Mammary epithelial cell (primary cell): ENCODE measurements at regions of chr10 and their contacts with region 1.

Region 1: DNA sequence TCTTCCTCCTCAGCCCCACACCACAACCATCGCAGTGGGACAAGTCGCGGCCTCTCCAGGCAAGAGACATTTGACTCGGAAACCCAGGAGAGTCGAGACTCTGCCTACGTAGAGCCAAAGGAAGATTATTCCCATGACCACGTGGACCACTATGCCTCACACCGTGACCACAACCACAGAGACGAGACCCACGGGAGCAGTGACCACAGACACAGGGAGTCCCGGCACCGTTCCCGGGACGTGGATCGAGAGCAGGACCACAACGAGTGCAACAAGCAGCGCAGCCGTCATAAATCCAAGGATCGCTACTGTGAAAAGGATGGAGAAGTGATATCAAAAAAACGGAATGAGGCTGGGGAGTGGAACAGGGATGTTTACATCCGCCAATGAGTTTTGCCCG is 112.1 kb downstream of the NSUN6 start:
- DNase-seq: no peak
- H3K4me3 ChIP-seq: no peak overlapping the region
- H3K27ac ChIP-seq: no peak overlapping the region
- H3K4me1 ChIP-seq: no peaks in the 10 kb centered on the region
- H3K27me3 ChIP-seq: no peaks in the 10 kb centered on the region
- CTCF ChIP-seq: no peak

Region 2: DNA sequence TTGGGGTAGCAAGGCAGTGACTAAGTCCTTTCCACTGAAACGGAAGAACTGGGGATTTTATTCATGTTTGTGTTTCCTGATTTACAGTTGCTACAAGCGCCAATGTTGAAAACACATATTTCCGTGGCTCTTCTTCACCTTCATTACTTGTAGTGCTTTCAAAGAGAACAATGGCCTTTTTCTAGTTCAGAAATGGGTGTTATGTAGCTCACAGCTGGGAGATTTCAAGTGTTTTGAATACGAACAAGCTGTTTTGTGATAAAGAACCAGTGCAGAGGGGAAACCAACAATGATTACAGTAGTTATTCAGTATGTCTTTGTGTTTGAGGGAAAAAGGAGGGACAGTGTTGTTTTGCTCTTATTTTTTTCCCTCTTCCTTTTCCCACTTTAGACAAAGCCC is 41.4 kb before region 1 on chr10:
- CTCF ChIA-PET with region 1: no interaction called
- dilution Hi-C with region 1: no loop called
- in situ Hi-C with region 1: no loop called
- intact Hi-C with region 1: no loop called
- DNase-seq: no peak
- H3K4me3 ChIP-seq: no peak overlapping the region
- H3K27ac ChIP-seq: no peak overlapping the region
- H3K4me1 ChIP-seq: no peaks in the 10 kb centered on the region
- H3K27me3 ChIP-seq: no peaks in the 10 kb centered on the region
- CTCF ChIP-seq: no peak

Region 3: GRCh38 chr10:18583575-18584270 is 44.4 kb after region 1 on chr10:
- CTCF ChIA-PET with region 1: no interaction called
- dilution Hi-C with region 1: no loop called
- in situ Hi-C with region 1: loop called in 1 of 2 experiments (anchors 5 kb)
- intact Hi-C with region 1: no loop called
- DNase-seq: no peak
- H3K4me3 ChIP-seq: no peak overlapping the region
- H3K27ac ChIP-seq: no peak overlapping the region
- H3K4me1 ChIP-seq: peaks cover 6% of the 10 kb centered on the region
- H3K27me3 ChIP-seq: no peaks in the 10 kb centered on the region
- CTCF ChIP-seq: peak; percentile 8 to 19